Activated naive CD4-positive, alpha-beta T cell treated with anti-CD3 and anti-CD28 coated beads for 36 hours (primary cell): ENCODE measurements at regions of chr9 and their contacts with region 1.

Region 1: GRCh38 chr9:109182940-109183798 is 16.1 kb upstream of the FRRS1L start:
- DNase-seq: peak; percentile 23
- H3K4me3 Mint-ChIP-seq: no peak overlapping the region
- H3K27ac Mint-ChIP-seq: no peak overlapping the region
- H3K4me1 Mint-ChIP-seq: peaks cover 15% of the 10 kb centered on the region
- H3K27me3 Mint-ChIP-seq: peaks cover 3% of the 10 kb centered on the region

Region 2: GRCh38 chr9:109012876-109013678 is 170.1 kb before region 1 on chr9 and contains the start of gene CTNNAL1:
- CTCF ChIA-PET with region 1: interaction called, 3 read pairs
- intact Hi-C with region 1: loop called (anchors 1 kb)
- DNase-seq: peak; percentile 86
- H3K4me3 Mint-ChIP-seq: peak within 1 kb of the TSS; percentile 95
- H3K27ac Mint-ChIP-seq: peak within 1 kb of the TSS; percentile 68
- H3K4me1 Mint-ChIP-seq: peaks cover 28% of the 10 kb centered on the region
- H3K27me3 Mint-ChIP-seq: no peaks in the 10 kb centered on the region
- total RNA-seq, gene CTNNAL1: 18.4 to 19.0 TPM

Region 3: DNA sequence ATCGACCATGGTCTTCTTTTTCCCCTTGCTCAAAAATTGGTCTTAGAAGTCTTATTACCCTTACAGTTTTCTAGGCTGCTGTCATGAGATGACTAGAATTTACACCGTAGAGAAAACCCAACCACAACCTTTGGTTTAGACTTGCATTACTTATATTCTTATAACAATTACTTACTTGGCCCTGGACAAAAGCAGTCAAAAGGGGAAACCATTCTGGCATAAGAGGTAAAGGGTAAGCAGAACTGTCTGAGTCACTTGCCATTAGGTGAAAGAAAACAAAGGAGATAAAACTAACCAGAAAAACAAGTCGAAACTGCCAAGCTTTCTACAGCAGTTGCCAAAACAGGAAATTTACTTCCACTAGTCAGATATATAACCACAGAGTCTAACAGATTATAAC is 81.4 kb before region 1 on chr9:
- CTCF ChIA-PET with region 1: no interaction called
- intact Hi-C with region 1: loop called (anchors 1 kb)
- DNase-seq: no peak
- H3K4me3 Mint-ChIP-seq: peak overlapping the region; percentile 37
- H3K27ac Mint-ChIP-seq: peak overlapping the region; percentile 75
- H3K4me1 Mint-ChIP-seq: peaks cover 64% of the 10 kb centered on the region
- H3K27me3 Mint-ChIP-seq: no peaks in the 10 kb centered on the region

Region 4: DNA sequence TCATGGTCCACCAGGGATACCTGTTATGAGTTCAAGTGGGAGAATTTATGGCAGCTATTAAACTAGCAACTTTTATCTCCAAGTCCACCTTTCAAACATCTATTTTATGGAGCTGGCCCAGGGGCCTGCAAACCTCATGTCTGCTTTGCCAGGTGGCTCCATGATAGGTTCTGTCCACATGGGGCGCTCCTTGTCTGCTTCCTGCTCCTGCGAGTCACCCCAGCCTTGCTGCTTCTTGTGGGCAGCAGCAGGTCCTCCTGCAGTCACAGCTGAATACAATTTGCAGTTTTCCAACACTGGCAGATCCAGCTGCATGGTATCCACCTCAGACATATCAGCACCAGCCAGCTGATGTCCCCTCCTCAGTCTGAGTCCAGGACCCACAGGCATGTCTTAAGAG is 23.5 kb after region 1 on chr9:
- CTCF ChIA-PET with region 1: interaction called, 3 read pairs
- intact Hi-C with region 1: loop called (anchors 1 kb)
- DNase-seq: peak; percentile 13
- H3K4me3 Mint-ChIP-seq: no peak overlapping the region
- H3K27ac Mint-ChIP-seq: no peak overlapping the region
- H3K4me1 Mint-ChIP-seq: no peaks in the 10 kb centered on the region
- H3K27me3 Mint-ChIP-seq: peaks cover 7% of the 10 kb centered on the region

Region 5: GRCh38 chr9:109320742-109321448 is 137.7 kb after region 1 on chr9 and contains the start of gene EPB41L4B:
- CTCF ChIA-PET with region 1: interaction called, 3 read pairs
- intact Hi-C with region 1: loop called (anchors 5 kb)
- DNase-seq: peak; percentile 95
- H3K4me3 Mint-ChIP-seq: peak within 1 kb of the TSS; percentile 69
- H3K27ac Mint-ChIP-seq: no peak within 1 kb of the TSS
- H3K4me1 Mint-ChIP-seq: peaks cover 10% of the 10 kb centered on the region
- H3K27me3 Mint-ChIP-seq: peaks cover 50% of the 10 kb centered on the region
- total RNA-seq, gene EPB41L4B: 0.24 to 0.25 TPM

Region 6: GRCh38 chr9:109918339-109919163 is 735.4 kb after region 1 on chr9:
- CTCF ChIA-PET with region 1: no interaction called
- intact Hi-C with region 1: no loop called
- DNase-seq: peak; percentile 64
- H3K4me3 Mint-ChIP-seq: peak overlapping the region; percentile 44
- H3K27ac Mint-ChIP-seq: peak overlapping the region; percentile 92
- H3K4me1 Mint-ChIP-seq: peaks cover 24% of the 10 kb centered on the region
- H3K27me3 Mint-ChIP-seq: no peaks in the 10 kb centered on the region